Naive thymus-derived CD4-positive, alpha-beta T cell (primary cell): ENCODE measurements at regions of chr7 and their contacts with region 1.

Region 1: DNA sequence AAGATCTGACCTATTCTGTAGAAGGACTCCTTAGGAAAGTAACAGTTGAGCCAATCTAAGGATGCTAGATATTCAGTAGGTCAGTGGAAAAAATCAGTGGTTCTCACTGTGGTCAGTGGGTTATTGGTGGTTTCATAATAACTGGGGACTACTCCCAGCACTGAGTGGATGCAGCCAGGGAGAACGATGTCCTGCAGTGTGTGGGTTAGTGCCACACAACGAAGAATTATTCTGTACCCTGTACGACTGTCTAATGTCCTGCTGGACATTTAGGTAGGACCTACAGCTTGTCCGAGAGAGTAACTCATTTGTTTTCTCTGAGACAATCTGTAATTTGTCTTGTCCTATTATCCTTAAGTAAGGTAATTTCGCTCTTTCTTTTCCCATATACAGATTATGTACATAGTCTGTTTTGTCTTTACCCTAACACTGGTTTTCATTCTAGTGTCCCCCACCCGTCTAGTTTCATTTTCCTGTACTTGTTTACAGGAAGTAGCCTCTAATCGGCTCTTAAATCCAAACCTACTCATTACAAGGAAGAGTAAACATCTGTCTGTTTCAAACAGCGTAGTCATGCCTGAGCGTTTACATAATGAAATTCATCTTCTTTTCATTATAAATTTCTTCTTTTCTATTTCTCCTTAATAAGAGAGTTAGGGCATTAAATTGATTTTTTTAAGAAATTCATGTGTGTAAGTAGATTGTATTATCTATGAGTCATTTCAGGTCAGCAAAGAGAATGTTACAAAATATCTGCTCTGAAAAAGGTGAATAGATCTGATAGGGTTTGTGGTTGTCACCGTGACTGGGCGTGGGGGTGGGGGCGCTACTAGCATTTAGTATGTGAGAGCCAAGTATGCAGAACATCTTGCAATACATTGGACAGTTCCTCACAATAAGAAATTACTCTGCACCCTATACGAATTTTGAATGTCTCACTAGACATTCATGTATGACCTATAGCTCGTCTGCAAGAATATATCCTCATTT is 8.3 kb upstream of the ZC3HAV1L start:
- DNase-seq: peak in 5 of 9 donors; percentile 36 to 71 (median 40)
- ATAC-seq: peak; percentile 81
- H3K4me3 ChIP-seq: no peak overlapping the region
- H3K4me3 Mint-ChIP-seq: peak overlapping the region in 9 of 10 donors; percentile 4 to 87 (median 58)
- H3K27ac ChIP-seq: peak overlapping the region; percentile 50
- H3K27ac Mint-ChIP-seq: peak overlapping the region; percentile 48 to 89 (median 79)
- H3K4me1 ChIP-seq: peaks cover 36 to 38% of the 10 kb centered on the region in 2 donors
- H3K4me1 Mint-ChIP-seq: peaks cover 35 to 77% (median 67%) of the 10 kb centered on the region in 7 donors
- H3K27me3 ChIP-seq: no peaks in the 10 kb centered on the region
- H3K27me3 Mint-ChIP-seq: no peaks in the 10 kb centered on the region

Region 2: DNA sequence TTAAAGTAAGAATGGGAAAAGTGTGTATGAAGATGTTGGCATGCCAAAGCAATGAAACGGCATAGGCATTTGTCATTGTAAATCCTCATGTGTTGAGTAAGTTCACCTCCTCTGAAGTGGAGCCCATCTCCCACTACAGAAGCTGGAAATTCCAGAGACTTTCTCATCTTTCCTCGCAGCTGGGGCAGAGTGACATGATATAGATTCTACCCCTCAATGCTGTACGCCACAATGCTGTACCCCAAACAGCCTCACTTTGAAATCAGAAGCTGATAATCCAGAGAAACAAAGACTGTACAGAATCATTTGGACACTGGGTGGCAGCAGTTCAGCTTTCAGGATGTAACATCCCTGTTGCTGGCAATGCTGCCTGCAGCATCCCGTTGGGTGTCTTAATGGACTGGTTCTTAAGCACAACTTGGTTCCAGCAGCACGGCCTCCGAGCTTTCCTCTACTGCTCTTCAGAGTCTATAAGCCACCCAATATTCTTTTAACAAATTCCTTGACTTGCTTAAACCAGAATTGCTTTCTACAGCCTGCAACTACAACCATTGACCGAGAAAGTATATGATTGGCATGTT is 27.1 kb before region 1 on chr7:
- CTCF ChIA-PET with region 1: no interaction called
- POLR2A ChIA-PET with region 1: interaction called, 3 read pairs
- intact Hi-C with region 1: loop called in 1 of 2 experiments (anchors 2 kb)
- DNase-seq: peak; percentile 17 to 76 (median 52)
- ATAC-seq: peak; percentile 94
- H3K4me3 ChIP-seq: no peak overlapping the region
- H3K4me3 Mint-ChIP-seq: no peak overlapping the region
- H3K27ac ChIP-seq: no peak overlapping the region
- H3K27ac Mint-ChIP-seq: peak overlapping the region in 1 of 9 donors; percentile 52
- H3K4me1 ChIP-seq: no peaks in the 10 kb centered on the region
- H3K4me1 Mint-ChIP-seq: peaks cover 0 to 10% (median 6%) of the 10 kb centered on the region in 7 donors
- H3K27me3 ChIP-seq: no peaks in the 10 kb centered on the region
- H3K27me3 Mint-ChIP-seq: peaks cover 0 to 16% (median 5%) of the 10 kb centered on the region in 5 donors

Region 3: GRCh38 chr7:139058943-139059342 is 14.8 kb after region 1 on chr7:
- CTCF ChIA-PET with region 1: interaction called, 3 read pairs
- POLR2A ChIA-PET with region 1: interaction called, 4 read pairs
- intact Hi-C with region 1: loop called (anchors 2 kb)
- DNase-seq: no peak
- ATAC-seq: no peak
- H3K4me3 ChIP-seq: no peak overlapping the region
- H3K4me3 Mint-ChIP-seq: peak overlapping the region in 1 of 10 donors; percentile 16
- H3K27ac ChIP-seq: peak overlapping the region; percentile 22
- H3K27ac Mint-ChIP-seq: peak overlapping the region in 8 of 9 donors; percentile 38 to 91 (median 79)
- H3K4me1 ChIP-seq: peaks cover 0 to 16% of the 10 kb centered on the region in 2 donors
- H3K4me1 Mint-ChIP-seq: peaks cover 28 to 63% (median 49%) of the 10 kb centered on the region in 7 donors
- H3K27me3 ChIP-seq: no peaks in the 10 kb centered on the region
- H3K27me3 Mint-ChIP-seq: no peaks in the 10 kb centered on the region